ENCODE measurements at regions of chr1 and their contacts with region 1.

Region 1: DNA sequence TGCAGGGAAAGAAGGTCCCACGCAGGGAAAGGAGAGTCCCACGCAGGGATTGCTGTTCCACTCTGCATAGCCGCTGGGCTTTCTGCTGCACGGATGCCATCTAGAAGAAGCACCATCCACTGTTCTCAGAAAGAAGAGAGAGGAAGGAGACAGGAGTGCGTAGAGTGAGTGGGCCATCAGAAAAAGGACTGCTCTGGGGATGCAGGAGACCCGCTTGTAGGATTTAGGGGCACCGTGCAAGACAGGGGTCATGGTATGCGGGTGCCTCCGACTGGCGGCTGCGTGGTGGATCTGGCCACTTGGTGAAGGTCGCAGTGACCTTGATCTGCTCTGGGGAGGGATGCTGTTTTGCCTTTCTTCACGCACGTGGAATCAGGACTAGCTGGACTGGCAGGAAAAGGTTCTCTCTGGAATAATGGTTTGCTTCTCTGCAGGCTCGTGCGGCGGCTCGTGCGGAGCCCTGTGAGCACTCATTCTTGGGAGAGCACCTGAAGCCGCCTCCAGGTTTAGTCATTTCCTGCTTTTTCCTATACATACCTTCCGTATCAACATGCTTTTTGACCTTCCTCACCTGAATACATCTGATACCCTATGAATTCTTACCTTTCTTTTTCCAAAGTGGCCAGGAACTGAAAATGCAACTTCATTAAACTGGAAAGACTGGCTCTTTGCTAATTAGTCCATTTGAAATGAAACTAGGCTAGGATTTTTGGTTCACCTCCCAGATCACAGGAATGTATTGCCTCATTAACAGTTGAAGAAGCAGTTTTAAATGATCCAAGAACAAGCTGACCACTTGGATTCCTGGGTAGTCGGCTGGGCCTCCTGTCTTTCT is 181.6 kb downstream of the KIF26B start:
- DNase-seq: no peak
- H3K4me3 ChIP-seq: no peak overlapping the region
- H3K4me3 Mint-ChIP-seq: no peak overlapping the region
- H3K27ac Mint-ChIP-seq: no peak overlapping the region
- H3K4me1 ChIP-seq: peaks cover 23% of the 10 kb centered on the region
- H3K4me1 Mint-ChIP-seq: peaks cover 19% of the 10 kb centered on the region
- H3K27me3 ChIP-seq: no peaks in the 10 kb centered on the region
- H3K27me3 Mint-ChIP-seq: no peaks in the 10 kb centered on the region
- CTCF ChIP-seq: no peak

Region 2: DNA sequence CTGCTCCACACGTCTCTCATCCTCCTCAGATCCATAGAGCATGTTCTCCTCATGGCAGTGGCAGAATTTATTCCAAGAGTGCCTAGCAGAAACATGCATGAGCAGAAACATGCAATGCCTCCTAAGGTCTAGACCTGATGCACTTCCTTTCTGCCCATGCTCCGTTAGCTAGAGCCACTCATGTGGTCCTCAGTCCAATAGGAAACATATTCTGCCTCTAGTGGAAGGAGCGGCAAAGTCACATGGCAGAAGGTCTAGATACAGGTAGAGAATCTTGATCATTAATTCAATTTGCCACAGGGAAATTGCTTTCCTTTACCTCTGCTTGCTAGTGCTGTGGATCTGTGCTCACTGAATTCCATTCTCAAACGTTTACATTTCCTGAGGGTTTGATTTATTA is 51.2 kb before region 1 on chr1:
- CTCF ChIA-PET with region 1: no interaction called
- POLR2A ChIA-PET with region 1: interaction called, 10 read pairs
- intact Hi-C with region 1: no loop called
- DNase-seq: no peak
- H3K4me3 ChIP-seq: no peak overlapping the region
- H3K4me3 Mint-ChIP-seq: no peak overlapping the region
- H3K27ac Mint-ChIP-seq: no peak overlapping the region
- H3K4me1 ChIP-seq: no peaks in the 10 kb centered on the region; the same call in 1 of the 2 replicates
- H3K4me1 Mint-ChIP-seq: no peaks in the 10 kb centered on the region
- H3K27me3 ChIP-seq: no peaks in the 10 kb centered on the region
- H3K27me3 Mint-ChIP-seq: no peaks in the 10 kb centered on the region
- CTCF ChIP-seq: peak in 1 of 2 experiments; percentile 10